ENCODE measurements at regions of chr9 and their contacts with region 1.

Region 1: GRCh38 chr9:38707885-38708637 is 11.9 kb downstream of the FAM240B start:
- DNase-seq: no peak
- ATAC-seq: peak; percentile 95
- H3K4me3 Mint-ChIP-seq: no peak overlapping the region
- H3K27ac Mint-ChIP-seq: no peak overlapping the region
- H3K4me1 Mint-ChIP-seq: peaks cover 27% of the 10 kb centered on the region
- H3K27me3 Mint-ChIP-seq: no peaks in the 10 kb centered on the region; the same call in 1 of the 2 replicates
- CTCF ChIP-seq: peak; percentile 47; the same call in 1 of the 2 replicates

Region 2: GRCh38 chr9:38620483-38621433 is 87.3 kb before region 1 on chr9 and contains the start of gene ANKRD18A:
- CTCF ChIA-PET with region 1: interaction called, 12 read pairs
- POLR2A ChIA-PET with region 1: no interaction called
- DNase-seq: peak; percentile 96
- ATAC-seq: peak; percentile 85
- H3K4me3 Mint-ChIP-seq: peak within 1 kb of the TSS; percentile 88
- H3K27ac Mint-ChIP-seq: peak within 1 kb of the TSS; percentile 76; the same call in 1 of the 2 replicates
- H3K4me1 Mint-ChIP-seq: peaks cover 12% of the 10 kb centered on the region
- H3K27me3 Mint-ChIP-seq: peaks cover 46% of the 10 kb centered on the region
- CTCF ChIP-seq: peak; percentile 46
- total RNA-seq, gene ANKRD18A: 10.8 to 15.7 TPM (median 12.9 TPM) in 3 replicates

Region 3: DNA sequence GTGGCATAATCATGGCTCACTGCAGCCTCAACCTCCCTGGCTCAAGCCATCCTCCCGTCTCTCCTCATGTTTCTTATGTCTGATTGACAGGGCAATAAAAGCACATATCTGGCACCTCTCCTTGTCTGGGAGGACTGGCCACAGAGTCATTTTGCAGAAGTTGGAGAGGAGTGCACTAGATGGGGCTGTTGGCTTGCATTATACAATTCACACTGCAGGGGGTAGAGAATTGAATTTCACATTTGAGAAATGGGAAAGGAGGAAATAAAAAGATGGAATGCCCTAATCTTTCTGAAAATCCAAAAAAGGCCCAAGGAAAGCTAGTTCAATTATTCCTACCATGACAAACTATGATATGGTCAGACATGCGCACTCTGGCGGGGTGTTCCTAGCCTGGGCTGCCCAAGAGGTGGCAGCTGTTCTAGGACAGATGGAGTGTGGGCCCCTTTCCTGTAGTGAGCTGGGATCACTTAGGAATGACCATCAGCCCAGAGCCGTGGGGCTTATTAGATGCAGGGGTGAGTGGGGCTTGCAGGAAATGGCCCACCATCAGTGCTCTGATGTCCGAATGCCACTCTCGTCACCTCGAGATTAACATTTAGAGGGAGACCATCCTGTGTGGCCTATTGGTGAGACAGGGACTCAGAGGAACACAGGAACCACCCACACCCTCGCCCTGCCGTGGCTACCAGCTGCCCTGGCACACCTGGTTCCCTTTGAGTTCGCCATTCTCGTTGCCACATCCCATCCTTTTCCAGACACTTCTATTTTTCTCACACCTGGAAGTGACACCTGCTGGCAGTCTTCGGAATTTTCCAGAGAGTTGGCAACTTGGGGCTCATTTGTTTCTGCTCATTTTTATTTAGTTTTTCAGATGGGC is 65.8 kb before region 1 on chr9:
- CTCF ChIA-PET with region 1: interaction called, 22 read pairs
- POLR2A ChIA-PET with region 1: no interaction called
- DNase-seq: peak; percentile 55
- ATAC-seq: peak; percentile 62
- H3K4me3 Mint-ChIP-seq: no peak overlapping the region
- H3K27ac Mint-ChIP-seq: no peak overlapping the region
- H3K4me1 Mint-ChIP-seq: peaks cover 25% of the 10 kb centered on the region
- H3K27me3 Mint-ChIP-seq: no peaks in the 10 kb centered on the region; the same call in 1 of the 2 replicates
- CTCF ChIP-seq: peak; percentile 67

Region 4: DNA sequence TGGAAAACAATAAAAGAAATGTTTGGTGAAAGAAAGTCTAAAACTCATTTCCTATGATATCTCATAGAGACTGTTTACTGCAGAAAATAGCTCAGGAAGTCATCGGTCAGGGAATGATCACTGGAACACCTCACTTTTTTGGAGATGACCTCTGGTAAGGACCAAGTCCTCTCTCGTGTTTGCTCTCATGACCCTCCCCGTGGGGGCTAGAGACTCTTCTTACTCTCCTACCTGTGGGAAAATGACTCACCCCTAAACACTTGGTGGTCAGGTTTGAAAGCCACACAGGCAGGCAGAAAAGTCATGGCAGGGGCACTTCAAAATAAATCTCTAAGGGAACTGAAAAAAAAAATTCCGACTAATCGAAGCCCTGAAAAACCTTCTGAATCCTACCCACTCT is 36.3 kb before region 1 on chr9:
- CTCF ChIA-PET with region 1: interaction called, 15 read pairs
- POLR2A ChIA-PET with region 1: no interaction called
- DNase-seq: no peak
- ATAC-seq: no peak
- H3K4me3 Mint-ChIP-seq: peak overlapping the region; percentile 50; the same call in 1 of the 2 replicates
- H3K27ac Mint-ChIP-seq: peak overlapping the region; percentile 70
- H3K4me1 Mint-ChIP-seq: peaks cover 43% of the 10 kb centered on the region
- H3K27me3 Mint-ChIP-seq: peaks cover 4% of the 10 kb centered on the region; the same call in 1 of the 2 replicates
- CTCF ChIP-seq: no peak

Region 5: GRCh38 chr9:38689678-38690077 is 18.4 kb before region 1 on chr9:
- CTCF ChIA-PET with region 1: interaction called, 28 read pairs
- POLR2A ChIA-PET with region 1: no interaction called
- DNase-seq: peak; percentile 42
- ATAC-seq: peak; percentile 80
- H3K4me3 Mint-ChIP-seq: peak overlapping the region; percentile 2; the same call in 1 of the 2 replicates
- H3K27ac Mint-ChIP-seq: peak overlapping the region; percentile 86
- H3K4me1 Mint-ChIP-seq: peaks cover 89% of the 10 kb centered on the region
- H3K27me3 Mint-ChIP-seq: no peaks in the 10 kb centered on the region; the same call in 1 of the 2 replicates
- CTCF ChIP-seq: no peak

Region 6: GRCh38 chr9:38727497-38728001 is 19.5 kb after region 1 on chr9:
- CTCF ChIA-PET with region 1: interaction called, 10 read pairs
- POLR2A ChIA-PET with region 1: interaction called, 3 read pairs
- DNase-seq: peak; percentile 59
- ATAC-seq: peak; percentile 97
- H3K4me3 Mint-ChIP-seq: no peak overlapping the region
- H3K27ac Mint-ChIP-seq: peak overlapping the region; percentile 88
- H3K4me1 Mint-ChIP-seq: peaks cover 7% of the 10 kb centered on the region
- H3K27me3 Mint-ChIP-seq: no peaks in the 10 kb centered on the region; the same call in 1 of the 2 replicates
- CTCF ChIP-seq: no peak